Heart right ventricle (tissue), 16 donors: ENCODE measurements at regions of chr16 and their contacts with region 1.

Region 1: DNA sequence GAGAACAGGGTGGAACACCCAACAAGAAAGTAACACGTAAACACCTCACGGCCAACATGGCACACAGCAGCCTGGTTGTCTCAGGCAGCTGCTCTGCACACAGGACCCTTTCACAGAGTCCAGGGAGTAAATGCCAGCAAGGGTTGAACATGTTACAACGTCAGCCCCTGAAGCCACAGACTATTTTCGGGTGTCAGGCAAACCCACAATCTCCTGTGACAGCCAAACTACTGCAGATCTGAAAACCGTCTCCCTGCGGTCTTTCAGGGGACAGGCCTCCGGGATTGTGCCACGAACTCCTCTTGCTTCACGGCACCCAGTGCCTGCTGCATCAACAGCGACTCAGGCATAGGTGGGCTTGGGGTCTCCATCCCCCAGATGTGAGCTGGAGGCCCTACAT is 127.7 kb downstream of the XYLT1 start:
- DNase-seq: no peak
- ATAC-seq: no peak
- H3K4me3 ChIP-seq: no peak overlapping the region
- H3K27ac ChIP-seq: no peak overlapping the region
- H3K4me1 ChIP-seq: peaks cover 3 to 79% (median 28%) of the 10 kb centered on the region in 9 donors
- H3K27me3 ChIP-seq: no peaks in the 10 kb centered on the region
- CTCF ChIP-seq: no peak

Region 2: DNA sequence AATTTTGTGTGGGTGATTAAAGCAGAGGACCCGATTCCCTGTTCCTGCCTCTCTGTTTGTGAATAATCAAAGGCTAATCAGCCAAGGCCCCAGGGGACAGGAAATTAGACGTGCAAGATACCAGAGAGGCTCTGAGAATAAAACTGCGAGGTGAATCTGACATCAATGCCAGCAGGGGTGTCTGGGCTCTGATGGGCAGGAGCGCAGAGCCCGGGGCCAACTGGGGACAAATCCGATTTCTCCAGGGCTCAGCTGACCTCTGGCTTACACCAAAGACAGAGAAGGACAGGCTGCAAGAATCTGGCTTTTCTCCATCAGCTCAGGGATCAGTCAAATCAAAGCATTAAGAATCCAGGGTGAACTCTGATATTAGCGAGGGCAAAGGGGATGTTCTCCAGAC is 46.6 kb before region 1 on chr16:
- intact Hi-C with region 1: loop called in 2 of 10 experiments (anchors 5 to 10 kb)
- DNase-seq: peak; percentile 19 to 39
- ATAC-seq: peak in 7 of 8 donors; percentile 34 to 85 (median 64)
- H3K4me3 ChIP-seq: no peak overlapping the region
- H3K27ac ChIP-seq: peak overlapping the region in 5 of 10 donors; percentile 12 to 55 (median 40)
- H3K4me1 ChIP-seq: peaks cover 2 to 17% (median 10%) of the 10 kb centered on the region in 9 donors
- H3K27me3 ChIP-seq: no peaks in the 10 kb centered on the region
- CTCF ChIP-seq: no peak

Region 3: DNA sequence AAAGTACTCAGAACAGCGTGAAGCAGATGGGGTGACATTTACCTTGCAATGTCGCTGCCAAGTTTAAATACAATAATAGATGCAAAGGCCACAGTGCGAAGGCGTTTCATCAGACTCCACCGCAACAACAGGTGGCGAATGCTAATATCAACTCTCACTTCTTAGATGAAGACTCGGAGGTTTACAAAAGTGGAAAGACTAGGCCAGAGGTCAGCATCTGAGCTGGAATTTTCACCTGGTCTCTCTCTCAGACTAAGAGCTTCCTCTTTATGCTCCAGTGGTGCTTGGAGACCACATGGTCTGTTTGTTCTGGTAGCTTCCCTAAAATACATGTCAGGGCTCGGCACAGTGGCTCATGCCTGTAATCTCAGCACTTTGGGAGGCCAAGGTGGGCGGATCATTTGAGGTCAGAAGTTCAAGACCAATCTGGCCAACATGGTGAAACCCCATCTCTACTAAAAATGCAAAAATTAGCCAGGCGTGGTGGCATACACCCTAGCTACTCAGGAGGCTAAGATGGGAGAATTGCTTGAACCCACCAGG is 41.4 kb before region 1 on chr16:
- intact Hi-C with region 1: loop called in 2 of 10 experiments (anchors 5 to 10 kb)
- DNase-seq: no peak
- ATAC-seq: no peak
- H3K4me3 ChIP-seq: no peak overlapping the region
- H3K27ac ChIP-seq: no peak overlapping the region
- H3K4me1 ChIP-seq: peaks cover 3 to 35% (median 6%) of the 10 kb centered on the region in 9 donors
- H3K27me3 ChIP-seq: no peaks in the 10 kb centered on the region
- CTCF ChIP-seq: no peak

Region 4: DNA sequence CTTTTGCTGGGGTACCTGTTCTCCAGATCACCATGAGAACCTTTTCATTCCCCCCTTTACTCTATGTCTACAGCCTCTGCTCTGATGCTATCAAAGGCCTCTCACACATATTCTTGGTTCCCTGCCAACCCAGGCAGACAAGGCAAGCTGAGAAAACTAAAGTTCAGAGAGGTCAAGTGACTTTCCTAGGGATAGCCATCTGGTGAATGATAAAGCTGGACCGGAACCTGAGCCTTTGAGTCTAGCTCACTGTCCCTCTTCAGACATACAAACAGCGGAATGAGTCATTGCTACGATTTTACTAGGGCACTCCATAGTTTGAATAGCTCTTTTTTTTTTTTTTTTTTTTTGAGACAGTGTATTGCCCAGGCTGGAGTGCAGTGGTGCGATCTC is 54.5 kb after region 1 on chr16:
- intact Hi-C with region 1: loop called in 1 of 10 experiments (anchors 10 kb)
- DNase-seq: peak in 1 of 2 donors; percentile 32
- ATAC-seq: peak; percentile 48 to 77 (median 66)
- H3K4me3 ChIP-seq: no peak overlapping the region
- H3K27ac ChIP-seq: peak overlapping the region in 2 of 10 donors; percentile 16 to 28
- H3K4me1 ChIP-seq: peaks cover 4 to 30% (median 22%) of the 10 kb centered on the region in 9 donors
- H3K27me3 ChIP-seq: no peaks in the 10 kb centered on the region
- CTCF ChIP-seq: no peak

Region 5: DNA sequence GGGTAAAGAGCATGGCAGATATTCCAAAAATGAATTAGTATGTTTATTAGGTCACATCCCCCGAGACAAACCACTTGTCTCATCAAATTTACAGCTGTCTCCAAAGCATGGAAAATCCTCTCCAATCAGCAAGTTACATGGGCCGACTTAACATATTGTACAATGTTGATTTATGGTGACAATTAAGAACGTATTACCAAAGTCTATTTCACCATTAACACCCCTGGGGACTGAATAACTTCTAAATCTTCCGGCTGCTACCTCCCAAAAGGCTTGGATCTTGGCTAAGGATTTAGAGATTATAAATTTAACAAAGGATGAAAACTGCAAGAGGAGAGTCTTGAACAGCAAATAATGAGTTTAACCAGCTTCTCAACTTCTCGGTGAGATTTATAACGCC is 681.6 kb after region 1 on chr16:
- intact Hi-C with region 1: no loop called
- DNase-seq: no peak
- ATAC-seq: no peak
- H3K4me3 ChIP-seq: no peak overlapping the region
- H3K27ac ChIP-seq: no peak overlapping the region
- H3K4me1 ChIP-seq: peaks cover 0 to 9% (median 0%) of the 10 kb centered on the region in 9 donors
- H3K27me3 ChIP-seq: peaks cover 0 to 8% (median 0%) of the 10 kb centered on the region in 7 donors
- CTCF ChIP-seq: no peak